Endothelial cell of umbilical vein (primary cell): ENCODE measurements at regions of chrX and their contacts with region 1.

Region 1: DNA sequence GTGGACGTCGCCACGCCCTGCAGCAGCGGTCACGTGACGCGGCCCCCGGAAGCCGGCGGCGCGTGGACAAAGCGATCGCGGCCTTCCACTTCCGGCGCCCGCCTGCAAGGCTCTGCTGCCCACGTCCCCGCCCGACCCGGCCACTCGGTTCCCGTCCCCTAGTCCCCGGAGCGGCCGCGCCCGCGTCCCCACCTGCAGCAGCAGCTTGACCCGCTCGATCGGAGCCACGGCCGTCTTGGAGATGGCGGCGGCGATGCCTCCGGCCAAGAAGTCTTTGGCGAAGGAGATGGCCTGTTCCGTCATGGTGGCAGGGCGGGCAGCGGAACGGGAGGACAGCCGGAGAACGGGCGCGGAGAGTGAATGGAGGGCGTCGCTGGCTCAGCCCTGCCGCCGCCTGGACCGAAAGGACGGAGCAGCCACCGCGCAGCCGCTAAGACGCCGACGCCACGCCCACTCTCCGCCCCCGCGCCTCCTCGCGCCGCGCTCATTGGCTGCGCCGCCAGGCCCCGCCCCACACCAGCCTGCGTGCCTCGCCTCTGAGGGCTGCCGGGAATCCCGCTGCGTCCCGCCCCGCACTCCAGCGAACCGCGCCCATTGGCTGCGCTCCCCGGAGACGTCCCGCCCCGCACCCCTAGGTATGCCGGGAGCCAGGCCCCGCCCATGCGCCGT is at the start of gene SLC25A6:
- DNase-seq: peak; percentile 99
- H3K4me3 ChIP-seq: peak within 1 kb of the TSS; percentile 66 to 100 (median 89)
- H3K27ac ChIP-seq: peak within 1 kb of the TSS; percentile 73
- H3K4me1 ChIP-seq: peaks cover 15% of the 10 kb centered on the region
- H3K27me3 ChIP-seq: no peaks in the 10 kb centered on the region
- CTCF ChIP-seq: peak in 1 of 2 donors; percentile 14
- POLR2A ChIP-seq: peak; percentile 72
- total RNA-seq, gene SLC25A6: 408 and 410 TPM in 2 replicates

Region 2: DNA sequence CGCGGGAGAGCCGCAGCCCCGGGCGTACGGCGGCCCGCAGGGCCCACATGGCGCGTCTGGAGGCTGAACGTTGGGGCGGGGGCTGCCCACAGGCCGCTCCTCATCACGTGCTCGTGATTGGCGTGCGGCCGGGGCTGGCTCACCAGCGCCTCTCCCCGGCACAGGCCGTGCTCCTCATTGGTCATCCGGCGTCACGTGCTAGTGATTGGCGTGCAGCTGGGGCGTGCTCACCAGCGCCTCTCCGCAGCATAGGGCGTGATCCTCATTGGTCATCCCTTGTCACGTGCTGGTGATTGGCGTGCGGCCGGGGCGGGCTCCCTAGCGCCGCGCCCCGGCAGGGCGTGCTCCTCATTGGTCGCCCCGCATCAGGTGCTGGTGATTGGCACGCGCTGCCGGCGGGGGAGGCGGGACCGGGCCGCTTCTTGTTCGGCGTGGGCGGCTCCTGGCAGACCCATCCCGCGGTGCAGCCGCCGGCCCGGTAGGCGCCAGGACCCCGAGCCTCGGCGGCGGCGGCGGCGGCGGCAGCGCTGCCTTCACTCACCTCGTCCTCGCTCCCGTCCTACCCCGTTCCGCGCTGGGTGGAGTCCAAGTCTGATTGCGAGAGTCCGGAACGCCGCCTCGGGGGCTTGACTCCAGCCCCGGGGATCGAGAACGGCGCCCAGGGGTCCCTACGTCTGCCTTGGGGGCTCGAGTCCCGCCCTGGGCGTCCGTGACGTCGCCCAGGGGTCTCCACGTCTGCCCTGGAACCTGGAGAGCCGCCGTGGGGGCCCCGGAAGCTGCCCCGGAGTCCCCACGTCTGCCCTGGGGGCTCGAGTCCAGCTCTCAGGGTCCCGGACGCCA is 1072.9 kb before region 1 on chrX and contains the start of gene GTPBP6:
- CTCF ChIA-PET with region 1: no interaction called
- POLR2A ChIA-PET with region 1: no interaction called
- dilution Hi-C with region 1: no loop called
- intact Hi-C with region 1: loop called (anchors 1 kb)
- DNase-seq: peak; percentile 100
- H3K4me3 ChIP-seq: peak within 1 kb of the TSS; percentile 66 to 89 (median 84)
- H3K27ac ChIP-seq: peak within 1 kb of the TSS; percentile 84
- H3K4me1 ChIP-seq: peaks cover 5% of the 10 kb centered on the region
- H3K27me3 ChIP-seq: no peaks in the 10 kb centered on the region
- CTCF ChIP-seq: peak in 1 of 2 donors; percentile 20
- POLR2A ChIP-seq: peak; percentile 78
- total RNA-seq, gene GTPBP6: 62.1 and 63.5 TPM in 2 replicates

Region 3: DNA sequence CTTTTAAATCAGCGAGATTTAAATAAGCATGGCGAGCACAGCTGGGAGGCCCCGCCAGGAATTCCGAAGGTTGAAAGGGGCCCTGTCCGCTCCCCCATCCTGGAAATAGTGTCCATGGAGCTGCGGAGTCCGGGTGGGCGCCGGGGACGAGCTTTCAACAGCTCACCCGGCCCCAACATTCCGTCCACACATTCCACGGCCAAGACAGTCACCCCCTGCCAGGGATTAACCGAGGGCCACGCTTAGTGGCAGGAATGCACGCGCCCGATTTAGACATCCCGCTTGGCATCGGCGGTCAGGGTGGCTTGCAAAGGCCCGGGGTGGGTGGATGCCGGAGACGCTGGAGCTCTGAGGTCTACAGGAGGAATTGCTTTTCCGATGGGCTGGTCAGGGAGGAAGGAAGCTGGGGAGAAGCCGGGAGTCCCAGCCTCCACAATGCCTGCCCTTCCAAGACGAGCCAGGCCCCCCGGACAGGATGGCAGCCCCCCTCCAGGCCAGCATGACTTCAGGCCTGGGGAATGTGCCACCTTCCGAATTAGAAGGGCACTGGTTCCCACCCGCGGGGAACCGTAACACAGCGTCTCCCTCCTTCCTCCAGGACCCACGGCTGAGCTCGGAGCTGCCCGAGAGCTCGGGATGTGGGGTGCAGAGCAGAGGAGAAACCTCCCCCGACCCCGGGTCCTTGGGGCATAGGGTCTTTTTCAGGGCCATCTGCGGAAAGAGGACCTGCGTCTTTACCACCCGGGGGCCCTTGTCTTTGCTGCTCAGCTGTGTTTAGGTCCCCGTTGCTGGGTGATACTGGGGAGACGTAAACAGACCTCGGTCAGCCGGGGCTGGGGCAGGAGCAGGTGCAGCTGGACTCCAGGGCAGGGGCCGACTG is 978.3 kb before region 1 on chrX:
- CTCF ChIA-PET with region 1: no interaction called
- POLR2A ChIA-PET with region 1: no interaction called
- dilution Hi-C with region 1: no loop called
- intact Hi-C with region 1: no loop called
- DNase-seq: peak; percentile 59
- H3K4me3 ChIP-seq: peak overlapping the region in 2 of 3 experiments; percentile 4 to 40
- H3K27ac ChIP-seq: peak overlapping the region; percentile 15
- H3K4me1 ChIP-seq: peaks cover 8% of the 10 kb centered on the region
- H3K27me3 ChIP-seq: no peaks in the 10 kb centered on the region
- CTCF ChIP-seq: no peak
- POLR2A ChIP-seq: no peak

Region 4: DNA sequence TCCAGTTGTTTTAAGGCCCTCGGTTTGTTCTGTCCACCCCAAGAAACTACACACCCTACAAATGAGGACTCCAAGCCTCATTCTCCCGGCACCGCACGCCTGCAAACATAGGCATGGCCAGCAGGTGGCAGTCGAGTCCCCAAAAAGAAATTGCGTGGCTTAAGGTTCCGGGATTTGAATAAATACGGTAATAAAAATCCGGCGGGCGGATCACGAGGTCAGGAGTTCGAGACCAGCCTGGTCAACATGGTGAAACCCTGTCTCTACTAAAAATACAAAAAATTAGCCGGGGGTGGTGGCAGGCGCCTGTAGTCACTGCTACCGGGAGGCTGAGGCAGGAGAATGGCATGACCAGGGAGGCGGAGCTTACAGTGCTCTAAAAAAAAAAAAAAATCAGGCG is 145.0 kb before region 1 on chrX:
- CTCF ChIA-PET with region 1: no interaction called
- POLR2A ChIA-PET with region 1: no interaction called
- dilution Hi-C with region 1: no loop called
- intact Hi-C with region 1: loop called (anchors 2 kb)
- DNase-seq: peak; percentile 63
- H3K4me3 ChIP-seq: no peak overlapping the region
- H3K27ac ChIP-seq: no peak overlapping the region
- H3K4me1 ChIP-seq: no peaks in the 10 kb centered on the region
- H3K27me3 ChIP-seq: peaks cover 2% of the 10 kb centered on the region in 2 experiments
- CTCF ChIP-seq: peak; percentile 72 to 74
- POLR2A ChIP-seq: no peak

Region 5: DNA sequence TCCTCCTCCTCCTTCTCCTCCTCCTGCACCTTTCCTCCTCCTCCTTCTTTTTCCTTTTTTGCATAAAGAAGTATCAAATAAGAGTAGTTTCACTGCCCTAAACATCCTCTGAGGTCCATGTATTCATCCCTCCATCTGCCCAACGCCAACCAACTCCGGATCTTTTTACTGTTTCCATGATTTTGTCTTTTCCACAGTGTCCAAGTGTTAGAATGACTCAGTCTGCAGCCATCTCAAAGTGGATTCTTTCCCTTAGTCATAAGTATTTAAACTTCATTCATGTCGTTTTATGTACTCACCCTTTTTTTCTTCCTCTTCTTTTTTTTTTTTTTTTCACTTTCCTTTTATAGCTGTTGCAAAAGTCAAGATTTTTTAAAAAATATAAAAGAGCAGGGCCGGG is 110.3 kb before region 1 on chrX:
- CTCF ChIA-PET with region 1: no interaction called
- POLR2A ChIA-PET with region 1: no interaction called
- dilution Hi-C with region 1: no loop called
- intact Hi-C with region 1: no loop called
- DNase-seq: no peak
- H3K4me3 ChIP-seq: no peak overlapping the region
- H3K27ac ChIP-seq: no peak overlapping the region
- H3K4me1 ChIP-seq: no peaks in the 10 kb centered on the region
- H3K27me3 ChIP-seq: no peaks in the 10 kb centered on the region
- CTCF ChIP-seq: no peak
- POLR2A ChIP-seq: no peak

Region 6: DNA sequence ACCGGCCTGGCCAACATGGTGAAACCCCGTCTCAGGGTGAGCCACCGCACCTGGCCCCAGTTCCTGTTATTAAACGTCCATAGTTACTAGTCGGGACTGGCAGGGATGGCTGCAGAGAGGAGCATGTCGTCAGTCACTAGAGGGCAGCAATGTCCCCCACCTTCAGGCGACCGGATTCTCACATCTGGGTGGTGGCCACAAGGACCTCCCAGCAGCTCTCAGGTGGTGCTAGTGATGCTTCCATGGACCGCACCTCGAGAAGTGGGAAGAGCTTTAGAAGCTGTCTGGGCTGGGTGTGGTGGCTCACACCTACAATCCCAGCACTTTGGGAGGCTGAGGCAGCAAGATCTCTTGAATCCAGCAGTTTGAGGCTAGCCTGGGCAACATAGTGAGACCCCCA is 68.5 kb before region 1 on chrX:
- CTCF ChIA-PET with region 1: no interaction called
- POLR2A ChIA-PET with region 1: no interaction called
- dilution Hi-C with region 1: no loop called
- intact Hi-C with region 1: loop called (anchors 1 kb)
- DNase-seq: peak; percentile 72
- H3K4me3 ChIP-seq: no peak overlapping the region
- H3K27ac ChIP-seq: no peak overlapping the region
- H3K4me1 ChIP-seq: no peaks in the 10 kb centered on the region
- H3K27me3 ChIP-seq: no peaks in the 10 kb centered on the region
- CTCF ChIP-seq: peak; percentile 40 to 72
- POLR2A ChIP-seq: no peak

Region 7: DNA sequence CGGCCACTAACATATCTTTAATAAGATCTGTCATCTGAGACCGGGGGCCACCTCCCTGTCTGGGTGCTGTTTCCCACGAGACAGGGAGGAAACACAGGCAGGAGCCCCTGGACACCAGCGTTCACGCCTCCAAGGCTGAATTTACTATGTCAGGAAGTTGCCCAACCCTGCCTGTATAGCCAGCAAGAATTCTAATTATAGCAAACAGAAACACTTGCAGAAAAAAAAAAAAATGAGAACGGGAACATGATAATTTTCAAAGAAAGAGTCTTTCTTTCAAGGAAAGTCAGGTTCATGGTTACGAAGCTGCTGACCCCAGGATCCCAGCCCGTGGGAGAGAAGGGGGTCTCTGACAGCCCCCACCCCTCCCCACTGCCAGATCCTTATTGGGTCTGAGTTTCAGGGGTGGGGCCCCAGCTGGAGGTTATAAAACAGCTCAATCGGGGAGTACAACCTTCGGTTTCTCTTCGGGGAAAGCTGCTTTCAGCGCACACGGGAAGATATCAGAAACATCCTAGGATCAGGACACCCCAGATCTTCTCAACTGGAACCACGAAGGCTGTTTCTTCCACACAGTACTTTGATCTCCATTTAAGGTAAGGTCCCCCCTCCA is 55.4 kb before region 1 on chrX and contains the start of gene IL3RA:
- CTCF ChIA-PET with region 1: no interaction called
- POLR2A ChIA-PET with region 1: no interaction called
- dilution Hi-C with region 1: no loop called
- intact Hi-C with region 1: loop called (anchors 1 kb)
- DNase-seq: peak; percentile 63
- H3K4me3 ChIP-seq: peak within 1 kb of the TSS; percentile 38 to 87 (median 65)
- H3K27ac ChIP-seq: no peak within 1 kb of the TSS
- H3K4me1 ChIP-seq: peaks cover 14% of the 10 kb centered on the region
- H3K27me3 ChIP-seq: no peaks in the 10 kb centered on the region
- CTCF ChIP-seq: no peak
- POLR2A ChIP-seq: no peak
- total RNA-seq, gene IL3RA: 21.2 and 28.9 TPM in 2 replicates

Region 8: GRCh38 chrX:1355131-1356046 is 36.5 kb before region 1 on chrX:
- CTCF ChIA-PET with region 1: no interaction called
- POLR2A ChIA-PET with region 1: no interaction called
- dilution Hi-C with region 1: no loop called
- intact Hi-C with region 1: loop called (anchors 5 kb)
- DNase-seq: no peak
- H3K4me3 ChIP-seq: no peak overlapping the region
- H3K27ac ChIP-seq: no peak overlapping the region
- H3K4me1 ChIP-seq: no peaks in the 10 kb centered on the region
- H3K27me3 ChIP-seq: no peaks in the 10 kb centered on the region
- CTCF ChIP-seq: no peak
- POLR2A ChIP-seq: no peak

Region 9: GRCh38 chrX:1537035-1537715 is 145.3 kb after region 1 on chrX and contains the start of gene P2RY8:
- CTCF ChIA-PET with region 1: no interaction called
- POLR2A ChIA-PET with region 1: no interaction called
- dilution Hi-C with region 1: no loop called
- intact Hi-C with region 1: no loop called
- DNase-seq: no peak
- H3K4me3 ChIP-seq: no peak within 1 kb of the TSS
- H3K27ac ChIP-seq: no peak within 1 kb of the TSS
- H3K4me1 ChIP-seq: no peaks in the 10 kb centered on the region
- H3K27me3 ChIP-seq: no peaks in the 10 kb centered on the region
- CTCF ChIP-seq: no peak
- POLR2A ChIP-seq: no peak
- total RNA-seq, gene P2RY8: not detected in 2 replicates

Region 10: GRCh38 chrX:1591102-1591900 is 199.5 kb after region 1 on chrX and contains the start of gene AKAP17A:
- CTCF ChIA-PET with region 1: no interaction called
- POLR2A ChIA-PET with region 1: no interaction called
- dilution Hi-C with region 1: no loop called
- intact Hi-C with region 1: loop called (anchors 5 kb)
- DNase-seq: peak; percentile 95
- H3K4me3 ChIP-seq: peak within 1 kb of the TSS; percentile 76 to 96 (median 90)
- H3K27ac ChIP-seq: peak within 1 kb of the TSS; percentile 89
- H3K4me1 ChIP-seq: peaks cover 2% of the 10 kb centered on the region
- H3K27me3 ChIP-seq: no peaks in the 10 kb centered on the region
- CTCF ChIP-seq: no peak
- POLR2A ChIP-seq: peak; percentile 88
- total RNA-seq, gene AKAP17A: 39.7 and 45.5 TPM in 2 replicates